ENCODE measurements at regions of chr1 and their contacts with region 1.

Region 1: GRCh38 chr1:109773146-109773899 is 9.6 kb upstream of the EPS8L3 start:
- DNase-seq: peak; percentile 85
- ATAC-seq: peak; percentile 90
- H3K4me3 Mint-ChIP-seq: no peak overlapping the region
- H3K27ac Mint-ChIP-seq: no peak overlapping the region
- H3K4me1 Mint-ChIP-seq: peaks cover 27% of the 10 kb centered on the region
- H3K27me3 Mint-ChIP-seq: peaks cover 10% of the 10 kb centered on the region

Region 2: DNA sequence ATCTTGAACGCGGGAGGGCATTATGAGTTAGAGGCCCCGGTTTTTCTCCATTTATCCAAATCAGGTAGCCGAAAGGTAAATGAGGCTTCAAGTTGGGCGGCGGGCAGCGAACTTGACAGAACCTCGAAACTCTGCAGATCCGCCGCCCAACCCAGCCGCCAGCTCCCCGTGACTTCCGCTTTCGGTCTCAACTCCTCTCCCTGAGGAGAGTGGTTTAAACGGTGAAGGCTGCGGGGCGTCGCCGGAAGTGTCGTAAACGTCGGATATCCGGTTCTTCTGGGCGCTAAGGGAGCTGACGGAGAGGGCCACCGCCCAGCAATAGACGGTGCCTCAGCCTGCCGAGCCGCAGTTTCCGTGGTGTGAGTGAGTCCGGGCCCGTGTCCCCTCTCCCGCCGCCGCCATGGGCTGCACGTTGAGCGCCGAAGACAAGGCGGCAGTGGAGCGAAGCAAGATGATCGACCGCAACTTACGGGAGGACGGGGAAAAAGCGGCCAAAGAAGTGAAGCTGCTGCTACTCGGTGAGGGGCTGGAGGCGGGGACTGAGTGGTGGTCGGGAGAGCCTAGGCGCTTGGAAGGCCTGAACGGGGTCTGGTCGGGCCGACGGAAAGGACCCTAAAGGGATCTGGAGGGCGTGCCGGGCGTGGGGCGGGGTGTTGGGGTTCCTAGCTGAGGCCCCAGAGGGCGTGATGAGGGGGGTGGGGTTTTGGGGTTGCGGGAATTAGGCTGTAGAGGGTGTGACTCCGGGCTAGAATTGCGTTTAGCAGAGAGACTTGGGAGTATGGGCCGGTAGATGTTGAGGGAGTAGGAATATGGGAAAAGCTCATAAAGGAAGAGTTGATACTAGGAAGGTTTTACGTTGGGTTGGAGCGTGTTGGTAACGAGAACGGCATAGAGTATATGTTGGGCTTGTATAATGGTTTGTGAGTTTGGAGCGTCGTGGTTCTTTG is 224.7 kb before region 1 on chr1 and contains the start of gene GNAI3:
- CTCF ChIA-PET with region 1: interaction called, 88 read pairs
- POLR2A ChIA-PET with region 1: interaction called, 7 read pairs
- DNase-seq: peak; percentile 98
- ATAC-seq: peak; percentile 92
- H3K4me3 Mint-ChIP-seq: peak within 1 kb of the TSS; percentile 97
- H3K27ac Mint-ChIP-seq: peak within 1 kb of the TSS; percentile 98
- H3K4me1 Mint-ChIP-seq: peaks cover 44% of the 10 kb centered on the region
- H3K27me3 Mint-ChIP-seq: no peaks in the 10 kb centered on the region
- total RNA-seq, gene GNAI3: 9.6 to 10.2 TPM

Region 3: DNA sequence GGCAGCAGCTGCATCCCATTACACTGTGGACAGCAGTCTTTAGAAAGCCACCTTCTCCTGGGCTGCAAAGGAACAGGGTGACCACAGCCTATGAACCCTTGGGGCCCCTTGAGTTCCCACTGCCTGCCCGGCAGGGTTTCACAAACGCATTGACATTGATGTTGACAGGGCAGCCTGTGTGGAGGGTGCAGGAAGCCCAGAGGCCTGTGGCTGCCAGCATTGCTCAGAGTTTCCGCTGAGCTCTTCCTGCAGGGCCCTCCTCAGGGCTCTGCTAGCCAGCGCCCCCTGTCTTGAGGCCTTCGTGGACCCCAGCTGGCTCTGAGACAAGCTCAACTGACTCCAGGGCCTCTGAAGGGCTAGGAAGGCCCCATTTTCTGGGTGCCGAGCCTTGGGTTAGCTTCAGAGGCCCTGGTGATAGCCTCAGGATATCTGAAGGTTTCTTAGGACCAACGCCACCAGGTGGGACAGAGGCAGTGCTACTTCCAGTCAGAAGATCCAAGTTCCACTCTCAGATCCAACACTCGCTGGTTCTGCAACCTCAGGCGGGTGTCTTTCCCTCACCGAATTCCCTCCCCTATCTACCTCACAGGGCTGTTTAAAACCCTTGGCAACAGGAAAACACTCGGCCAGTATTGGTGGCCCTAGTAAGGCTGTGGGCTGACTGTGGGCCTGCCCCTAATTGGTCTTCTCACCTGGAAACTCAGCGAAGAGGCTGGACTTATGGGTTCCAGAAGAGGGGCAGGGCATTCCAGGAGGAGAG is 17.6 kb after region 1 on chr1:
- CTCF ChIA-PET with region 1: interaction called, 172 read pairs
- POLR2A ChIA-PET with region 1: interaction called, 3 read pairs
- DNase-seq: peak; percentile 94
- ATAC-seq: peak; percentile 95
- H3K4me3 Mint-ChIP-seq: peak overlapping the region; percentile 42
- H3K27ac Mint-ChIP-seq: peak overlapping the region; percentile 96
- H3K4me1 Mint-ChIP-seq: peaks cover 91% of the 10 kb centered on the region
- H3K27me3 Mint-ChIP-seq: no peaks in the 10 kb centered on the region

Region 4: GRCh38 chr1:109807822-109808680 is 34.7 kb after region 1 on chr1:
- CTCF ChIA-PET with region 1: interaction called, 13 read pairs
- POLR2A ChIA-PET with region 1: no interaction called
- DNase-seq: no peak
- ATAC-seq: no peak
- H3K4me3 Mint-ChIP-seq: no peak overlapping the region
- H3K27ac Mint-ChIP-seq: no peak overlapping the region
- H3K4me1 Mint-ChIP-seq: peaks cover 51% of the 10 kb centered on the region
- H3K27me3 Mint-ChIP-seq: peaks cover under 1% of the 10 kb centered on the region

Region 5: DNA sequence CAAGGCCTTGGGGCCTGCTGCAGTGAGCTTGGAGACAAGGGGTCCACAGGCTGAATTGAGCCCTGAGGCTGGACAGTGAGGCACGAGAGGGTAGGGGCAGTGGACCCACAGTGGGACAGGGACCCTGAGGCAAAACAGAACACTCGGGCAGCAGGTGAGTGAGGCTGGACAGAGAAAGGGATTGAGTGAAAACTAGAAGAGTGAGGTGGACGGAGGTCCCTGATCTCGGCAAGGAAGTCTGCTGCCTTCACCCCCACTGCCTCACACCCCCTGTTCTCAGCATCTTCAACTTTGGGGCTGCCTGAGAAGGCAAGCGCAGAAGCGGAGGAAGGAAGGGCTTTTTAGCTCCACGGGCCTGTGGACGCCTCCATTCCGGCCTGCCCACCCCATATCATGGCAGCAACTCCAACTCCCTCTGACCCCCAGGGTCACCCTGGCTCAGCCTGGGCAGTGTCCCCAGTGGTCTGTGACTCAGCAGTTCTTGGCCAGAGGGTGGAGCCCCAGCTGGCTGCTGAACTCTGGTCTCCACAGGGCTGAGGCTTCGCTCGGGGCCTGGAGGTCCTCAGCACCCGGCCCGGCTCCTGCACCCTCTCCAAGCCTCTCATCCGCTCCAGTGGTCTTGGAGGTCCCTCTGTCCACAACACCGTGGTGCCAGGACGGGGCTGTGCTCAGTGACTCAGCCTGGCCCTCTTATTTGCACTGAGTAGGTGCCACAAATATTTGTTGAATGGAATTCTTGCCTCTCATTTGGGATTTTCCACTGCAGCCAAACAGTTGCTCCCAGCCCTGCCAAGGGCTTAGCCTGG is 50.4 kb after region 1 on chr1:
- CTCF ChIA-PET with region 1: no interaction called
- POLR2A ChIA-PET with region 1: no interaction called
- DNase-seq: no peak
- ATAC-seq: no peak
- H3K4me3 Mint-ChIP-seq: no peak overlapping the region
- H3K27ac Mint-ChIP-seq: peak overlapping the region; percentile 6
- H3K4me1 Mint-ChIP-seq: peaks cover 55% of the 10 kb centered on the region
- H3K27me3 Mint-ChIP-seq: no peaks in the 10 kb centered on the region

Region 6: DNA sequence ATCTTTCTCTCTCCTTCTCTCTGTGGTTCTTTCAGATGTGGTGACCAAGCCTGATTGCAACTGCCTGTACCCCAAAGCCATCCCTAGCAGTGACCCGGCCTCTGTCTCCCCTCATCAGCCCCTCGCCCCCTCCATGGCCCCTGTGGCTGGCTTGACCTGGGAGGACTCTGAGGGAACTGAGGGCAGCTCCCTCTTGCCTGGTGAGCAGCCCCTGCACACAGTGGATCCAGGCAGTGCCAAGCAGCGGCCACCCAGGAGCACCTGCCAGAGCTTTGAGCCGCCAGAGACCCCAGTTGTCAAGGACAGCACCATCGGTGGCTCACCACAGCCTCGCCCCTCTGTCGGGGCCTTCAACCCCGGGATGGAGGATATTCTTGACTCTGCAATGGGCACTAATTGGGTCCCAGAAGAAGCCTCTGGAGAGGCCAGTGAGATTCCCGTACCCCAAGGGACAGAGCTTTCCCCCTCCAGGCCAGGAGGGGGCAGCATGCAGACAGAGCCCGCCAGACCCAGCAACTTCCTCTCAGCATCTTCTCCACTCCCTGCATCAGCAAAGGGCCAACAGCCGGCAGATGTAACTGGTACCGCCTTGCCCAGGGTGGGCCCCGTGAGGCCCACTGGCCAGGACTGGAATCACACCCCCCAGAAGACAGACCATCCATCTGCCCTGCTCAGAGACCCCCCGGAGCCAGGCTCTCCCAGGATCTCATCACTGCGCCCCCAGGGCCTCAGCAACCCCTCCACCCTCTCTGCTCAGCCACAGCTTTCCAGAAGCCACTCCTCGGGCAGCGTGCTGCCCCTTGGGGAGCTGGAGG is 150.0 kb after region 1 on chr1:
- CTCF ChIA-PET with region 1: interaction called, 17 read pairs
- POLR2A ChIA-PET with region 1: no interaction called
- DNase-seq: no peak
- ATAC-seq: peak; percentile 14
- H3K4me3 Mint-ChIP-seq: no peak overlapping the region
- H3K27ac Mint-ChIP-seq: peak overlapping the region; percentile 50
- H3K4me1 Mint-ChIP-seq: peaks cover 29% of the 10 kb centered on the region
- H3K27me3 Mint-ChIP-seq: no peaks in the 10 kb centered on the region

Region 7: DNA sequence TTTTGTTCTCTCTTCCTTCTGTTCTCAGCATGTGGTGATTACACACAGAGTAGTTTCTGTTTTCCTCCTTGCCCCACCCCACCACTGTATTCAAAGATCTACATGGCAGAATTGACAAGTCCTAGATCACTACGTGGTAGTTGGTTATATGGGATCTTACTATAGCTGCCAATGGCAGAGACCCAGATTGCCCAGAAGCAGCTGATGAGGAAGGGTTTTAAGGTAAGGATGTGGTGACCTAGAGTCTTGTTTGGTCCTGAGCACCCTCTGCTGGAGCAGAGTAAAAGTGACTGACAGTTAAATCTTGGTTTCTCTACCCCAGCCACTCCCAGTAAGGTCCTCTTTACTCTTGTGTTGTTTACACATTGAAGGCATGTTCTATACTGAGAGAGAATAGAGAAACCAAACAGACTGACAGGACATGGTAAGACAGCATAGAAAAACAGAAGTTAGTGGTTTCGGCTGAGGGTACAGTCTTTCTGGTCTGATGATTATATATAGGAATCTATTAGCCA is 238.3 kb after region 1 on chr1:
- CTCF ChIA-PET with region 1: interaction called, 66 read pairs
- POLR2A ChIA-PET with region 1: no interaction called
- DNase-seq: peak; percentile 58
- ATAC-seq: peak; percentile 95
- H3K4me3 Mint-ChIP-seq: no peak overlapping the region
- H3K27ac Mint-ChIP-seq: peak overlapping the region; percentile 19
- H3K4me1 Mint-ChIP-seq: peaks cover 3% of the 10 kb centered on the region
- H3K27me3 Mint-ChIP-seq: no peaks in the 10 kb centered on the region

Measured in activated CD8-positive, alpha-beta T cell treated with anti-CD3 and anti-CD28 coated beads, Interleukin-2, amount 10 ng/mL, durations not matched to agents 7 days and 5 days (primary cell).